Naive thymus-derived CD4-positive, alpha-beta T cell (primary cell): ENCODE measurements at regions of chr18 and their contacts with region 1.

Region 1: GRCh38 chr18:49486953-49487710 is at the start of gene C18orf32:
- DNase-seq: peak; percentile 84 to 93 (median 92)
- ATAC-seq: peak; percentile 94
- H3K4me3 ChIP-seq: peak within 1 kb of the TSS; percentile 95
- H3K4me3 Mint-ChIP-seq: peak within 1 kb of the TSS; percentile 77 to 98 (median 94)
- H3K27ac ChIP-seq: peak within 1 kb of the TSS; percentile 95
- H3K27ac Mint-ChIP-seq: peak within 1 kb of the TSS; percentile 90 to 98 (median 96)
- H3K4me1 ChIP-seq: peaks cover 34 to 39% of the 10 kb centered on the region in 2 donors
- H3K4me1 Mint-ChIP-seq: peaks cover 40 to 83% (median 70%) of the 10 kb centered on the region in 7 donors
- H3K27me3 ChIP-seq: no peaks in the 10 kb centered on the region
- H3K27me3 Mint-ChIP-seq: no peaks in the 10 kb centered on the region
- total RNA-seq, gene C18orf32: 22.5 to 53.6 (median 31.5) TPM

Region 2: GRCh38 chr18:48410095-48410920 is 1076.8 kb before region 1 on chr18:
- CTCF ChIA-PET with region 1: no interaction called
- POLR2A ChIA-PET with region 1: no interaction called
- intact Hi-C with region 1: loop called in 1 of 2 experiments (anchors 5 kb)
- DNase-seq: peak in 6 of 9 donors; percentile 9 to 87 (median 36)
- ATAC-seq: peak; percentile 91
- H3K4me3 ChIP-seq: peak overlapping the region; percentile 43
- H3K4me3 Mint-ChIP-seq: peak overlapping the region; percentile 50 to 84 (median 76)
- H3K27ac ChIP-seq: no peak overlapping the region
- H3K27ac Mint-ChIP-seq: no peak overlapping the region
- H3K4me1 ChIP-seq: peaks cover 0 to 6% of the 10 kb centered on the region in 2 donors
- H3K4me1 Mint-ChIP-seq: peaks cover 4 to 20% (median 14%) of the 10 kb centered on the region in 7 donors
- H3K27me3 ChIP-seq: peaks cover 4 to 5% of the 10 kb centered on the region in 2 donors
- H3K27me3 Mint-ChIP-seq: peaks cover 69 to 75% (median 71%) of the 10 kb centered on the region in 5 donors

Region 3: GRCh38 chr18:49459404-49460171 is 27.5 kb before region 1 on chr18:
- CTCF ChIA-PET with region 1: interaction called, 10 read pairs
- POLR2A ChIA-PET with region 1: interaction called, 31 read pairs
- intact Hi-C with region 1: loop called (anchors 1 kb)
- DNase-seq: peak in 3 of 9 donors; percentile 4 to 17 (median 5)
- ATAC-seq: peak; percentile 19
- H3K4me3 ChIP-seq: peak overlapping the region; percentile 86
- H3K4me3 Mint-ChIP-seq: peak overlapping the region; percentile 88 to 95 (median 94)
- H3K27ac ChIP-seq: peak overlapping the region; percentile 80
- H3K27ac Mint-ChIP-seq: peak overlapping the region; percentile 67 to 89 (median 83)
- H3K4me1 ChIP-seq: peaks cover 14 to 26% of the 10 kb centered on the region in 2 donors
- H3K4me1 Mint-ChIP-seq: peaks cover 34 to 62% (median 47%) of the 10 kb centered on the region in 7 donors
- H3K27me3 ChIP-seq: no peaks in the 10 kb centered on the region
- H3K27me3 Mint-ChIP-seq: peaks cover 0 to 6% (median 0%) of the 10 kb centered on the region in 5 donors

Region 4: DNA sequence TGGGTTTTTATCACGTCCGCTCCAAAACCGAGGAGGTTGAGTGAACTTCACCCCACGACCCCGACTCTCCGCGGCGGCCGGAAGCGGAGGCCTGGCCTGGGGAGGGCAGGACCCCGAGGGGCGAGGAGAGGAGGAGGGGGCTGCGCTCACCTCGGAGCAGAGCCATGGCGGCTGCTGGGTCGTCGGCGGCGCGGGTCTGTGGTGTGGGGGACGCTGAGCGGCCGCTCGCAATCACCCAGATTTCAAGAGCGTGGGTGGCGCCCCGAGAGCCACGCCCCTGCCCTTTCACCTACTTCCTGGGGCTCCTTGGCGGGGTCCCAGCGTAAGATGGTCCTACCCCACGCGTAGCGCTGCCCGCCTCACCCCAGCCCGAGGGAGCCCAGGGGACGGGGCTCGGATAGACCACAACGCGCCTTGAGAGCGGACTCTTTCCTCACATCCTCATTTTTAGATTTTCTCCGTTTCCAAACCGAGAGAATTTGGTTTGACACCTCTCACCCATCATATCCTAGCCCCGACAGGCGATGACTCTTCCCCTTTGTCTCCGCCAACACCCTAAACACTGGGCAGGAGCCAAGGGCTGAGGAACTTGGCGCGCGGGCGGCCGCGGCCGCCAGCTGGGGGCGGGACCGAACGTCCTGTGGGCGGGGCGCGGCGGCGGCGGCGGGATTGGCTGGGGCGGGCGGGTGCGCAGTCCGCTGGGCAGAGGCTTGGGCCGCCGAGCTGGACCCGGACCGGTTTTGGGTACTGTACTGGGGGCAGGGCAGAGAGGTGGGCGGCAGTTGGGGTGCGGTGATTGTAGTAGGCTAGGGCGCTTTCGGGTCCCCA is 326.4 kb after region 1 on chr18 and contains the start of gene ACAA2:
- CTCF ChIA-PET with region 1: no interaction called
- POLR2A ChIA-PET with region 1: interaction called, 4 read pairs
- intact Hi-C with region 1: loop called (anchors 1 kb)
- DNase-seq: peak; percentile 48 to 87 (median 60)
- ATAC-seq: peak; percentile 93
- H3K4me3 ChIP-seq: peak within 1 kb of the TSS; percentile 87
- H3K4me3 Mint-ChIP-seq: peak within 1 kb of the TSS; percentile 89 to 99 (median 96)
- H3K27ac ChIP-seq: peak within 1 kb of the TSS; percentile 90
- H3K27ac Mint-ChIP-seq: peak within 1 kb of the TSS; percentile 91 to 99 (median 97)
- H3K4me1 ChIP-seq: peaks cover 20 to 39% of the 10 kb centered on the region in 2 donors
- H3K4me1 Mint-ChIP-seq: peaks cover 42 to 70% (median 63%) of the 10 kb centered on the region in 7 donors
- H3K27me3 ChIP-seq: no peaks in the 10 kb centered on the region
- H3K27me3 Mint-ChIP-seq: no peaks in the 10 kb centered on the region
- total RNA-seq, gene ACAA2: 15.4 to 94.7 (median 24.4) TPM

Region 5: GRCh38 chr18:50281295-50281971 is 794.3 kb after region 1 on chr18 and contains the start of gene MBD1:
- CTCF ChIA-PET with region 1: no interaction called
- POLR2A ChIA-PET with region 1: interaction called, 10 read pairs
- intact Hi-C with region 1: loop called (anchors 1 kb)
- DNase-seq: peak; percentile 90 to 99 (median 97)
- ATAC-seq: peak; percentile 94
- H3K4me3 ChIP-seq: peak within 1 kb of the TSS; percentile 94
- H3K4me3 Mint-ChIP-seq: peak within 1 kb of the TSS; percentile 90 to 99 (median 97)
- H3K27ac ChIP-seq: peak within 1 kb of the TSS; percentile 88
- H3K27ac Mint-ChIP-seq: peak within 1 kb of the TSS; percentile 93 to 99 (median 97)
- H3K4me1 ChIP-seq: peaks cover 21 to 33% of the 10 kb centered on the region in 2 donors
- H3K4me1 Mint-ChIP-seq: peaks cover 24 to 53% (median 45%) of the 10 kb centered on the region in 7 donors
- H3K27me3 ChIP-seq: no peaks in the 10 kb centered on the region
- H3K27me3 Mint-ChIP-seq: peaks cover 0 to 2% (median 0%) of the 10 kb centered on the region in 5 donors
- total RNA-seq, gene MBD1: 97.5 to 158 (median 118) TPM

Region 6: DNA sequence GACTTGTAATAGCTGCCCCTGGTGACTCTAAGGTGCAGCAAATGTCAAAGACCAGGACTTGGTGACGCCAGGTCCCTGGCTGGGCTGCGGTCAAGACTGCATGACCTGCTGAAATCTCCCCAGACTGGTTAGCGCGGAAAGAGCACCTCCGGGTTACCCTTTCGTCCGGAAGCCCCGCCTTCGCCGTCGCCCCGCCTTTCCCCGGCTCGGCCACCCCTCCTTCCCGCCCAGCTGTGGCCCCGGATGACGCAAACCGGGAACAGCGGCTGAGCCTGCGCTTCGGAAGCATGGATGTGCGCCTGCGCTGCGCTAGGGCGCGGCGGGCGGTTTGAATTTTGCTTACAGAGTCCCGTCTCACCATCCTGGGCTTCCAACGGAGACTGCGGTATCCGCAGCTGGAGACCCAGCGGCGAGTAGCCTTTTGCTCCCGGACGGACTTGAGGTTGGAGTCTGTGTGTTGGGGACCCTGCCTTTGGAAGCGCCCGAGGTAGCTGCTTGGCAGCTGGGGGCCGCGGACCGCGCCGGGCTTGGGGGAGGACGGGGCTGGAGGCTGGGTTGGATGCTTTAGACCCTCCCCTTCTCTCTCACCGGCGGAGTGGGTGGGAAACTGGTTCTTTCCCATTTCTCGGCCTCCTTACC is 887.7 kb after region 1 on chr18 and contains the start of gene SKA1:
- CTCF ChIA-PET with region 1: no interaction called
- POLR2A ChIA-PET with region 1: interaction called, 3 read pairs
- intact Hi-C with region 1: loop called (anchors 1 to 5 kb)
- DNase-seq: peak; percentile 85 to 92 (median 89)
- ATAC-seq: peak; percentile 99
- H3K4me3 ChIP-seq: peak within 1 kb of the TSS; percentile 62
- H3K4me3 Mint-ChIP-seq: peak within 1 kb of the TSS; percentile 75 to 90 (median 80)
- H3K27ac ChIP-seq: peak within 1 kb of the TSS; percentile 71
- H3K27ac Mint-ChIP-seq: peak within 1 kb of the TSS; percentile 72 to 91 (median 87)
- H3K4me1 ChIP-seq: peaks cover 0 to 13% of the 10 kb centered on the region in 2 donors
- H3K4me1 Mint-ChIP-seq: peaks cover 0 to 34% (median 14%) of the 10 kb centered on the region in 7 donors
- H3K27me3 ChIP-seq: peaks cover 0 to 6% of the 10 kb centered on the region in 2 donors
- H3K27me3 Mint-ChIP-seq: peaks cover 0 to 8% (median 7%) of the 10 kb centered on the region in 5 donors
- total RNA-seq, gene SKA1: 0.27 to 24.8 (median 0.43) TPM

Region 7: DNA sequence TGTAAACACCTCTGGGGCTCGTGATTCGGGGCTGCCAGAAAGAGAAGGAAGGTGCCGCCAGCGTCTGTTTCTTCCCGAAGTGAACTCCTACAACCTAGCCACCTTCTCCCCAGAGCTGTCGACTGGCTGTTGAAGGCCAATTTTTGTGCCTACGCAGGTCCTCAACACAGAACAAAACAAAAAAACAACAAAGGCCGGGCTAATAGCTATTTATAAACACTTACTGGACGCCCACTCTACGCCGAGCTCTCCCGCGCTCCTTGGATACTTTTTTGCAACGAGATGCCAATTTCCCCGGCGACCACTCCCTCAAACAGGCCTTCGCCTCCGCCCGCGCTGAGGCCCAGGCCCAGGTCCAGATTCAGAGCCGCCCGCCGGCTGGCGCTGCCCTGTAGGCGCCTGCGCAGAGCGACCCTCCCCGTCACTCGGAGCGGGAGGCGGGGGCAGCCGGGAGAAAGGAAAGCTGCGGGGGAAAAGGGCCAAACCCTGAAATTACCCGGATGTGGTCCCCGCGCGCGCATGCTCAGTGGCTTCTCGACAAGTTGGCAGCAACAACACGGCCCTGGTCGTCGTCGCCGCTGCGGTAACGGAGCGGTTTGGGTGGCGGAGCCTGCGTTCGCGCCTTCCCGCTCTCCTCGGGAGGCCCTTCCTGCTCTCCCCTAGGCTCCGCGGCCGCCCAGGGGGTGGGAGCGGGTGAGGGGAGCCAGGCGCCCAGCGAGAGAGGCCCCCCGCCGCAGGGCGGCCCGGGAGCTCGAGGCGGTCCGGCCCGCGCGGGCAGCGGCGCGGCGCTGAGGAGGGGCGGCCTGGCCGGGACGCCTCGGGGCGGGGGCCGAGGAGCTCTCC is 1542.8 kb after region 1 on chr18 and contains the start of gene SMAD4:
- CTCF ChIA-PET with region 1: no interaction called
- POLR2A ChIA-PET with region 1: interaction called, 3 read pairs
- intact Hi-C with region 1: loop called in 1 of 2 experiments (anchors 5 kb)
- DNase-seq: peak; percentile 95 to 99 (median 97)
- ATAC-seq: peak; percentile 89
- H3K4me3 ChIP-seq: peak within 1 kb of the TSS; percentile 63
- H3K4me3 Mint-ChIP-seq: peak within 1 kb of the TSS; percentile 96 to 100 (median 99)
- H3K27ac ChIP-seq: peak within 1 kb of the TSS; percentile 81
- H3K27ac Mint-ChIP-seq: peak within 1 kb of the TSS; percentile 95 to 100 (median 98)
- H3K4me1 ChIP-seq: peaks cover 13 to 40% of the 10 kb centered on the region in 2 donors
- H3K4me1 Mint-ChIP-seq: peaks cover 35 to 62% (median 57%) of the 10 kb centered on the region in 7 donors
- H3K27me3 ChIP-seq: no peaks in the 10 kb centered on the region
- H3K27me3 Mint-ChIP-seq: no peaks in the 10 kb centered on the region
- total RNA-seq, gene SMAD4: 82.5 to 170 (median 92.5) TPM